ENCODE measurements at regions of chr16 and their contacts with region 1.

Region 1: DNA sequence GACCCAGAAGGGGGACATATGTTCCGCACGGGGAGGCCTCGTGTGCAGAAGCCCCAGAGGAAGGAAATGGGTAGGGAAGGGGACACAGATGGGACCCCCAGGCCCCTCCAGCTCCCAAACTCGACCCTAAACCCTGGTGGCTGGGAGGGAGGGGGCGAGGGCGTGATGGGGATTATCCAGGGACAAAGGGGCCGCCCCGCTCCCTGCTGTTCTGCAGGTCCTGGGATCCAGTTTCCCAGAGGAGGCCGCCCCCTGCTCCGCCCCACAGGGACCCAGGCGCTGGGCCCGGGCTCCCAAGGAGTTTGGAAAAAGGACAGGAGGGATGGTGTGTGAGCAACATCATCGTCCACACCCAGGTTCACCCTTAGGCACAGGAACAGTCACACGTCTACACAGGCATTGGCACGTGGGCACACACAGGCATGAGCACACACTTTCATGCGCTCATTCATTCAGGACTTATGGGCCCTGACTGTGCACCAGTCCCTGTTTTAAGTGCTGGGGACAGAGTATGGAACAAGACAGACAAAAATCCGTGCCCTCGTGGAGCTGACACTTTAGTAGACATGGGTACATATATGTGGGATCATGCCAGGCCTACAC is 12.8 kb upstream of the FBXL19 start:
- DNase-seq: no peak
- ATAC-seq: no peak
- H3K4me3 ChIP-seq: no peak overlapping the region
- H3K27ac ChIP-seq: no peak overlapping the region
- H3K4me1 ChIP-seq: no peaks in the 10 kb centered on the region
- H3K27me3 ChIP-seq: no peaks in the 10 kb centered on the region
- CTCF ChIP-seq: no peak

Region 2: DNA sequence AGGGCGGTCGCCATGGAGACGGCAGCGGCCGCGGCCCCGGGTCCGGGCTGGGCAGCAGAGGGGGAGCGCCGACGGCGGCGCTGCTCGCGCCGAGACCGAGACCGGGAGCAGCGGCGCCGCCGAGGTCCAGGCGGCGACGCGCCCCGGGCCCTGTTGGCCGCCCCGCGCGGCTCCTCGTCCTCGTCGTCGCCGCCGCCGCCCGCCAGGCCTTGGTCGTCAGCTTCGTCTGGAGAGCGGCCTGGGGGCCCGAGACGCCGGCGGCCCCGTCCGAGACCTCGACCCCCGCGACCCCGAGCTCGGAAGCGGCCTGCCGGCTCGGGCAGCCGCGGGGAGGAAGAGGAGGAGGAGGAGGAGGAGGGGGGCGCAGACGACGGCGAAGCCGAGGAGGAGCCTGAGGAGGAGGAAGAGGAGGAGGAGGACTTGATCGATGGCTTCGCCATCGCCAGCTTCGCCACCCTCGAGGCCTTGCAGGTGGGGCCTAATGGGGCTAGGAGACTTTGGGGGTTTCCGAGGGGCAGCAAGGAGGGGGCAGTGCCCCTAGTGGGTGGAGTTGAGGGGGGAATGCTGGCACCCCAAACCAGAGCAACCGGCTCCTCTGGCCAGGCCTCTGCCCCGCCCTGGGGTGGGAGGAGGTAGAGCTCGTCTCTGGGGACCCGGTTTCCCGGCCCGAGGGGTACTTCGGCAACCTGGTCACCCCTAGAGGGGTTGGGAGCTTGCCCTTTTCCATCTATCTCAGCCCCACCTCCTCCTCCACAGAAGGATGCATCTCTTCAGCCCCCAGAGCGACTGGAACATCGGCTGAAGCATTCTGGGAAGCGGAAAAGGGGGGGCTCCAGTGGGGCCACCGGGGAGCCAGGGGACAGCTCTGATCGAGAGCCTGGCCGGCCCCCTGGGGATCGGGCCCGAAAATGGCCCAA is 250.8 kb before region 1 on chr16:
- intact Hi-C with region 1: loop called in 1 of 3 experiments (anchors 10 kb)
- DNase-seq: peak in 5 of 6 donors; percentile 51 to 83 (median 55)
- ATAC-seq: no peak
- H3K4me3 ChIP-seq: peak overlapping the region; percentile 73 to 95 (median 91)
- H3K27ac ChIP-seq: peak overlapping the region; percentile 91 to 100 (median 98)
- H3K4me1 ChIP-seq: peaks cover 18 to 25% (median 21%) of the 10 kb centered on the region in 3 donors
- H3K27me3 ChIP-seq: no peaks in the 10 kb centered on the region
- CTCF ChIP-seq: no peak

Region 3: GRCh38 chr16:30844671-30845449 is 65.7 kb before region 1 on chr16:
- intact Hi-C with region 1: loop called in 2 of 3 experiments (anchors 5 kb)
- DNase-seq: peak in 4 of 6 donors; percentile 60 to 86 (median 78)
- ATAC-seq: peak; percentile 88 to 97 (median 94)
- H3K4me3 ChIP-seq: peak overlapping the region in 2 of 4 donors; percentile 9 to 25
- H3K27ac ChIP-seq: peak overlapping the region in 2 of 4 donors; percentile 33 to 42
- H3K4me1 ChIP-seq: peaks cover 5 to 7% (median 5%) of the 10 kb centered on the region in 3 donors
- H3K27me3 ChIP-seq: no peaks in the 10 kb centered on the region
- CTCF ChIP-seq: peak; percentile 61 to 79 (median 76)

Measured in pancreas (tissue), 10 donors.